ENCODE measurements at regions of chr9 and their contacts with region 1.

Region 1: DNA sequence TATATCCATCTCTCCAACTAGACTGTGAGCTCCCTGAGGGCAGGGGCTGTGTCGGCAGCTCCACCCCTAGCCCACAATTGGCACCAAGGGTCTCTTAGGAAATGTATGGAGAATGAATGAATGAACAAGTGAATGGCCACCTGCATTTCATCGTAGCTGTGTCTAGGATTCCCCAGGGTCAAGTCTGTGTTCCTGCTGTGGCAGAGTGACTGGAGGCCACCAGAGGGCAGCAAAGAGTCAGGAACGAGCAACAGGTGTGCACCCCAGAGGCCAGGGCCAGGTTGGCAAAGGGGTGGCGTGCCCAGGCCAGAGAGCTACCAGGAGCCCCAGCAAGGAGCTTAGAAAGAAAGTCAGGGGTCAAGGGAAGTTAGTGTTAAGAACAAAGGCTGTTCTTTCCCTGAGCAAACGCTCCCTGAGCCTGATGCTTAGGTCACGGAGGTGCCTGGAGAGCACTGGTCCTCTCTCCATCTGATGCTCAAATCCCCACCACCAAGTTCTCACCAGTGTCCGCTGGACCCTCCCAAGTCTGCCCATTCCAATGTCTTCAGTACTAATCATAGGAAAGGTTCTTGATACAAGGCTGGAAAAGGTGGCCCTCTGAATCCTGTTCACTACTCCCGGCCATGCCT is 160.7 kb downstream of the PAX5 start:
- DNase-seq: no peak
- H3K4me3 ChIP-seq: no peak overlapping the region
- CTCF ChIP-seq: peak; percentile 91

Region 2: GRCh38 chr9:36854034-36854433 is 19.3 kb before region 1 on chr9:
- CTCF ChIA-PET with region 1: interaction called, 49 read pairs
- POLR2A ChIA-PET with region 1: no interaction called
- DNase-seq: no peak
- H3K4me3 ChIP-seq: no peak overlapping the region
- CTCF ChIP-seq: no peak

Region 3: DNA sequence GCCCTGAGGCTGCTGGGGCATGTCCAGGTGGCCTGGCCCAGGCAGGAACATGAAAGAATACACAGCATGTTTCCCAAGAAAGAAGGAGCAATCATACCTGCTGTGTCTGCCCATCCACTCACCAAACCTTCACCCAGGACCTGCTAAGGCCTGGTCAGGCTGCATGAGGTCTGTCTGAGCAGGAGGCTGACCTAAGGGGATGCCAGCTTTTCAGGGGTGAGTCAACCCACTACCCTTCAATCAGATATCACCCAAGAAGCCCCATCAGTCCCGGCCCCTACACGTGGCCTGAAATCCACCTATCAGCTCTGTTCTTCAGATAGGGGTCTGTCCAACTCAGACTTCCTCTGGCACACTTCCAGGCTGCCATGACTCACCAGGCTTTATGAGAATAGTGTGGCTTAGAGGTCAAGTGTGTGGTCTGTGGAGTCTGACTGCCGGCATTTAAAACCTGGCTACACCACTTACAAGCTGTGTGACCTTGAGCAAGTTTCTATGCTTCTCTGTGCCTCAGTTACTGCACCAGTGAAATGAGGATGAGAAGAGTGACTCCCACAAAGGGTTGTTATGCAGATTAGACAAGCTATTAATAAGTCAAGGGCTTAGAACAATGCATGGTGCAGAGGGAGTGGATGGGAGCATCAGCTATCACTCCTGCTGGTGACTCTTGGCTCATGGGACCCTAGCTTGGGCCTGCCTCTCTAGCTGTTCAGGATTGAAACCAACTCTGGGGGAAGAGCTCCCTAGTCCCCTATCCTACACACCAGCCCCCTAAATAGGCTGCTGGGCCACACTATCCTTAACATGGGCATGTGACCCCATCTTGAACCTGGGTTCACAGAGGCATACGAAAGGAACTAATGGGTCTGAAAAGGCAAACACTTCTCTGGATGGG is 30.4 kb after region 1 on chr9:
- CTCF ChIA-PET with region 1: interaction called, 17 read pairs
- POLR2A ChIA-PET with region 1: no interaction called
- DNase-seq: no peak
- H3K4me3 ChIP-seq: no peak overlapping the region
- CTCF ChIP-seq: no peak

Region 4: GRCh38 chr9:36987891-36988290 is 114.5 kb after region 1 on chr9:
- CTCF ChIA-PET with region 1: interaction called, 16 read pairs
- POLR2A ChIA-PET with region 1: no interaction called
- DNase-seq: no peak
- H3K4me3 ChIP-seq: no peak overlapping the region
- CTCF ChIP-seq: no peak

Region 5: DNA sequence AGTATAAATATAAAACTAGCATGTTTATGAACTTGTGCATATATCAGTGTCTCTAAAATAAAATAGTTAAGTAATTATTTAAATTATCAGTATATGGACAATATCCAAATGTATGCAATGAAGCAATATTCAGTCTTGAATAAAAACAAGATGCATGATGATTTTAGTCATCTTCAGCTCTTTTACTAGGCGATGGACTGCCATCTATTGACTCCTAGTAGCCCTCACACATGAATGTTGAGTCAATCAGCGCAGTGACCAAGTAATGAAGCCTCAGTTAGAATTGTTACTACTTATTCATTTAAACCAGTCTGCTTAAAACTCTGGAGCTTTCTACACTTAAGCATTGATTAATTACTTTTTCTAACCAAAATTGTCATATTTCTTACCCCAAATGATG is 456.2 kb after region 1 on chr9:
- CTCF ChIA-PET with region 1: interaction called, 37 read pairs
- POLR2A ChIA-PET with region 1: no interaction called
- DNase-seq: no peak
- H3K4me3 ChIP-seq: no peak overlapping the region
- CTCF ChIP-seq: peak; percentile 36

Region 6: GRCh38 chr9:37415011-37415719 is 541.8 kb after region 1 on chr9:
- CTCF ChIA-PET with region 1: interaction called, 50 read pairs
- POLR2A ChIA-PET with region 1: no interaction called
- DNase-seq: peak; percentile 42
- H3K4me3 ChIP-seq: no peak overlapping the region
- CTCF ChIP-seq: peak; percentile 81

Measured in AG04449 (cell line).